Panc1 (cell line): ENCODE measurements at regions of chr2 and their contacts with region 1.

Region 1: DNA sequence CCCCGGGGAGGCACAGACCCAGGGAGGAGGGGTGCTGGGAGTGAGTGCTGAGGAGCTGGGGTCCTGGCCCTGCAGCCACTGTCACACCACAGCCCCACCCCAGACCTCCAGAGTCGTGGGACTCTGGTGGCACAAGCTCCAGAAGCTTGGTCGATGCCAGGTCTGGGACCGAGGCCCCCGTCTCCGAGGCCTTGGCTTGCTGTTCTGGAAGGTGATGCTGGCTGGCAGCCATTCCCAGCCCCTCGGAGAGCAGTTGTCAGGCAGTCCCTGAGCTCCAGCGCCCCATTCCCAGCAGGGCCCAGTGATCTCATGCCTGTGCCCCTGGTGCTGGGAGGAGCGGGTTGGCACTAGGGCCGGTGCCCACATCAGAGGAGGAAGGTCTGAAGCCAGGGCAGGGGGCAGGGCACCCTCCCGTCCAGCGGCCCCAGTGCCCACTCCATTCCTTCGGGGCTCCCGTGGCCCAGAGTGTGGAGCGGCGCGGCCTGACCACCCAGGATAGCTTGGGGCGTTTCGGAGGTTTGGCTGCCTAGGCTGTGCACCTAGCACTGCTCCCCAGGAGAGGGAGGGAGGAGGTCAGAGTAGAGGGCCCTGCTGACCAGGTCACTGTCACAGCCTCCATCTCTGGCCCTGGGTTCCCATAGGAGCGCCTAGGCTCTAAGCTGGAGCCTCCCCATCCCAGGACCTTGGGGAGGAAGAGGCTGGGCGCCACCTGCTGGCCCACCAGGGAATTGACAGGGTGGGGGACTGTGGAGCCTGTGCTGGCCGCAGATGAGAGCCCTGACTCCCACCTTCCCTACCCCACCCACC is 16.8 kb upstream of the ALPI start:
- DNase-seq: no peak
- ATAC-seq: peak; percentile 72
- H3K4me3 ChIP-seq: no peak overlapping the region
- H3K27ac ChIP-seq: no peak overlapping the region; the same call in 1 of the 2 replicates
- H3K4me1 ChIP-seq: peaks cover 5% of the 10 kb centered on the region
- H3K27me3 ChIP-seq: no peaks in the 10 kb centered on the region
- CTCF ChIP-seq: peak; percentile 82

Region 2: GRCh38 chr2:231699006-231699405 is 740.1 kb before region 1 on chr2:
- CTCF ChIA-PET with region 1: interaction called, 22 read pairs
- POLR2A ChIA-PET with region 1: no interaction called
- in situ Hi-C with region 1: no loop called
- intact Hi-C with region 1: no loop called
- DNase-seq: no peak
- ATAC-seq: no peak
- H3K4me3 ChIP-seq: no peak overlapping the region
- H3K27ac ChIP-seq: no peak overlapping the region
- H3K4me1 ChIP-seq: no peaks in the 10 kb centered on the region
- H3K27me3 ChIP-seq: no peaks in the 10 kb centered on the region
- CTCF ChIP-seq: no peak

Region 3: DNA sequence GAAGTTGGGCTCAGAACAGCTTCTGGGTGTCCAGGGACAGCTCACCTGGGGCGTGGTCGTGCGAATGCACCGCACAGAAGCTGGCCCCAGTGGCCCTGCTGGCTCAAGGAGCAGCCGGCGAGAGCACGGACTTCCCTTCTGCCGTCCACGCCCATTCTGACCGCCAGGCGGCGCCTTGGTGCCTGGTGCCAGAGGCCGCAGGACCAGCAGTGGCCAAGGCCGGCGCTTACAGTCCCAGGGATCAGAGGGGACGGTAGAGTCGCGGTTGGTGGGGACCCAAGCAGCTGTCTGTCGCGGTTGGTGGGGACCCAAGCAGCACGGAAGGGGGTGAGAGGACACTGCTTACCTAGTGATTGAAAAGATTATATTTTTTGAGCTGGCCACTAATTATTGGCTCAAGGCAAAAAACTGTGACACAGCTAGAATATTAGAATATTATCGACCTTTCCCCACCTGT is 538.6 kb before region 1 on chr2:
- CTCF ChIA-PET with region 1: interaction called, 4 read pairs
- POLR2A ChIA-PET with region 1: no interaction called
- in situ Hi-C with region 1: no loop called
- intact Hi-C with region 1: loop called (anchors 5 kb)
- DNase-seq: peak; percentile 35
- ATAC-seq: peak; percentile 99
- H3K4me3 ChIP-seq: no peak overlapping the region
- H3K27ac ChIP-seq: no peak overlapping the region
- H3K4me1 ChIP-seq: 0 out of 2 replicates have a peak, but pooled peaks cover 6% of the 10 kb centered on the region
- H3K27me3 ChIP-seq: no peaks in the 10 kb centered on the region
- CTCF ChIP-seq: peak; percentile 99

Region 4: GRCh38 chr2:232190796-232191195 is 248.4 kb before region 1 on chr2:
- CTCF ChIA-PET with region 1: no interaction called
- POLR2A ChIA-PET with region 1: no interaction called
- in situ Hi-C with region 1: no loop called
- intact Hi-C with region 1: no loop called
- DNase-seq: no peak
- ATAC-seq: no peak
- H3K4me3 ChIP-seq: no peak overlapping the region
- H3K27ac ChIP-seq: no peak overlapping the region
- H3K4me1 ChIP-seq: no peaks in the 10 kb centered on the region
- H3K27me3 ChIP-seq: no peaks in the 10 kb centered on the region
- CTCF ChIP-seq: no peak

Region 5: DNA sequence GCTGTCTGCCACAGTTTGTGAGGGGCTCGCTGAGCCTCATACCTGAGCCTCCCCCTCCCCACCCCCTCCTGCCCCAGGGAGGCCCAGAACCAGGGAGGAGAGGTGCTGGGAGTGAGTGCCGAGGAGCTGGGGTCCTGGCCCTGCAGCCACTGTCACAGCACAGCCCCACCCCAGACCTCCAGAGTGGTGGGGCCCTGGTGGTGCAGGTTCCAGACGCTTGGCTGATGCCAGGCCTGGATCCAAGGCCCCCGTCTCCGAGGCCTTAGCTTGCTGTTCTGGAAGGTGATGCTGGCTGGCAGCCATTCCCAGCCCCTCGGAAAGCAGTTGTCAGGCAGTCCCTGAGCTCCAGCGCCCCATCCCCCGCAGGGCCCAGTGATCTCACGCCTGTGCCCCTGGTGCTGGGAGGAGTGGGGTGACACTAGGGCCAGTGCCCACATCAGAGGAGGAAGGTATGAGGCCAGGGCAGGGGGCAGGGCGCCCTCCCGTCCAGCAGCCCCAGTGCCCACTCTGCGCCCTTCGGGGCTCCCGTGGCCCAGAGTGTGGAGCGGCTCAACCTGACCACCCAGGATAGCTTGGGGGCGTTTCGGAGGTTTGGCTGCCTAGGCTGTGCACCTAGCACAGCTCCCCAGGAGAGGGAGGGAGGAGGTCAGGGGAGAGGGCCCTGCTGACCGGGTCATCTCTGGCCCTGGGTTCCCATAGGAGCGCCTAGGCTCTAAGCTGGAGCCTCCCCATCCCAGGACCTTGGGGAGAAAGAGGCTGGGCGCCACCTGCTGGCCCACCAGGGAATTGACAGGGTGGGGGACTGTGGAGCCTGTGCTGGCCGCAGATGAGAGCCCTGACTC is 113.5 kb before region 1 on chr2:
- CTCF ChIA-PET with region 1: no interaction called
- POLR2A ChIA-PET with region 1: no interaction called
- in situ Hi-C with region 1: no loop called
- intact Hi-C with region 1: no loop called
- DNase-seq: no peak
- ATAC-seq: peak; percentile 89
- H3K4me3 ChIP-seq: no peak overlapping the region
- H3K27ac ChIP-seq: no peak overlapping the region
- H3K4me1 ChIP-seq: peaks cover 7% of the 10 kb centered on the region
- H3K27me3 ChIP-seq: no peaks in the 10 kb centered on the region
- CTCF ChIP-seq: peak; percentile 87

Region 6: DNA sequence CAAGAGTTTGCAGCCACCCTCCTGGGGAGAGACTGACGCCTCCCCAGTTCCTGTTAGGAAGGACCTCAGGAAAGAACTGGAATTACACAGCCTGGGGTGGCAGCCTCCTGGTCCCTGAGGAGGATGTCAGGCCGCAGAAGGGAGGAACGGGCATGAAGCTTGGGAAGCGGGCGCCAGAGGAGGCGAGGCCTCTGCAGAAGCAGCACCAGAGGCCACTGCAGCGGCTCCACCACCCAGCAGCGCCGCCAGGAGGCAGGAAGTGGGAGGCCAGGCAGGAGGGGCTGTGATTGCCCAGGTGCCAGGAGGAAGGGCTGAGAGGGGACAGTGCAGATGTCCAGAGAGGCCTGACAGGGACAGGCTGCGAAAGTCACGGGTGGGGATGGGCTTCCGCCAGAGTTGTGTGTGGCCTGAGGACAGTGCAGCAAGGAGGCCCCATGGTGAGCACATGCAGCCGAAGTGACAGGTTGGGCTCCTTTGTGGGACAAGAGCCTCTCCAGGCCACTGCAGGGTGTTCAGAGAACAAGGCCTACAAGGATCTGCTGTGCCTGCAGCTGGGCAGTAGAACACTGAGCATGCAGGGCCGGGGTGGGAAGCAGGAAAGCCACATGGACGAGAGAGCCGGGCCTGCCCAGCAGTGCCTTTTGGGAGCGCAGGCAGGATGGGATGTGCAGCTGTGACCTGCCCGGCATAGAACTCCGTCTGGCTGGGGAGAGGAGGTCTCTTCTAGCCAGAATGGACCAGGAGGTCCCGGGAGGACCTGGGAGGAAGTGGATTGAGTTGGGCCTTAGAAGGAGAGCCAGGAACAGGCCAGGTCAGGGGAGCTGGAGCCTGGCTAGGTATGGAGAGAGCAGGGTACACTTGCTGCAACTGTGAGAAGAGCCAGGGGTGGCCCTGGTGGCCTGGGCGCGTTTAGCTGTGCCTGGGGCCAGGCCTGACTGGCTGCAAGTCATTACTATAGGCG is 99.8 kb before region 1 on chr2:
- CTCF ChIA-PET with region 1: interaction called, 7 read pairs
- POLR2A ChIA-PET with region 1: no interaction called
- in situ Hi-C with region 1: no loop called
- intact Hi-C with region 1: loop called (anchors 5 kb)
- DNase-seq: no peak
- ATAC-seq: no peak
- H3K4me3 ChIP-seq: no peak overlapping the region
- H3K27ac ChIP-seq: no peak overlapping the region
- H3K4me1 ChIP-seq: no peaks in the 10 kb centered on the region; the same call in 1 of the 2 replicates
- H3K27me3 ChIP-seq: no peaks in the 10 kb centered on the region
- CTCF ChIP-seq: no peak; the same call in 1 of the 2 replicates

Region 7: GRCh38 chr2:232365621-232366321 is 73.4 kb before region 1 on chr2:
- CTCF ChIA-PET with region 1: interaction called, 19 read pairs
- POLR2A ChIA-PET with region 1: no interaction called
- in situ Hi-C with region 1: no loop called
- intact Hi-C with region 1: no loop called
- DNase-seq: no peak
- ATAC-seq: peak; percentile 86
- H3K4me3 ChIP-seq: no peak overlapping the region
- H3K27ac ChIP-seq: no peak overlapping the region; the same call in 1 of the 2 replicates
- H3K4me1 ChIP-seq: peaks cover 12% of the 10 kb centered on the region
- H3K27me3 ChIP-seq: no peaks in the 10 kb centered on the region
- CTCF ChIP-seq: peak; percentile 84